ENCODE measurements at regions of chr18 and their contacts with region 1.

Region 1: GRCh38 chr18:9575558-9575957 is 38.8 kb downstream of the PPP4R1 start:
- DNase-seq: peak; percentile 96
- H3K4me3 ChIP-seq: no peak overlapping the region
- H3K27ac ChIP-seq: no peak overlapping the region
- H3K27me3 ChIP-seq: no peaks in the 10 kb centered on the region
- CTCF ChIP-seq: peak; percentile 92

Region 2: GRCh38 chr18:9494766-9495331 is 80.7 kb before region 1 on chr18:
- CTCF ChIA-PET with region 1: no interaction called
- POLR2A ChIA-PET with region 1: no interaction called
- DNase-seq: no peak
- H3K4me3 ChIP-seq: no peak overlapping the region
- H3K27ac ChIP-seq: peak overlapping the region; percentile 13
- H3K27me3 ChIP-seq: no peaks in the 10 kb centered on the region
- CTCF ChIP-seq: no peak

Region 3: GRCh38 chr18:9561759-9562158 is 13.8 kb before region 1 on chr18:
- CTCF ChIA-PET with region 1: interaction called, 21 read pairs
- POLR2A ChIA-PET with region 1: no interaction called
- DNase-seq: no peak
- H3K4me3 ChIP-seq: no peak overlapping the region
- H3K27ac ChIP-seq: no peak overlapping the region
- H3K27me3 ChIP-seq: no peaks in the 10 kb centered on the region
- CTCF ChIP-seq: no peak

Region 4: GRCh38 chr18:9586814-9587213 is 11.3 kb after region 1 on chr18:
- CTCF ChIA-PET with region 1: no interaction called
- POLR2A ChIA-PET with region 1: no interaction called
- DNase-seq: no peak
- H3K4me3 ChIP-seq: no peak overlapping the region
- H3K27ac ChIP-seq: no peak overlapping the region
- H3K27me3 ChIP-seq: no peaks in the 10 kb centered on the region
- CTCF ChIP-seq: no peak

Region 5: DNA sequence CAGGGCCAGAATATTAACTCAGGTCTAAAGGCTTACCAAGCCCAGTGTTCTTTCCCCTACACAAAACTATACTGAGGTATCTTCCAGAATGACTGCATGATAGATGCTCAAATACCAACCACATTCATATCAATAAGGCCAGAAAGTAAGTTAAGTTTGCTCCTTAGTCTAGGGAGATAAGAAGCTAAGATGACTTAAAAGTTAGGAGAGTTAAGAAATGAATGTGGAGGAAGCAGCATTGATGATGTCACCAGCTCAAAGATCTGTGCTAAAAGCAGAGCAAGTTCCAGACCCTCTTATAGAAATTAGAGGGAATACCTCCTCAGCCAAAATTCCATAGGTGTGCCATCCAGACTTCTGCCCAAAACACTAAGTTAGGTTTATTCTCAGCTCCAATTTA is 32.7 kb after region 1 on chr18:
- CTCF ChIA-PET with region 1: interaction called, 12 read pairs
- POLR2A ChIA-PET with region 1: no interaction called
- DNase-seq: no peak
- H3K4me3 ChIP-seq: no peak overlapping the region
- H3K27ac ChIP-seq: no peak overlapping the region
- H3K27me3 ChIP-seq: no peaks in the 10 kb centered on the region
- CTCF ChIP-seq: no peak

Region 6: GRCh38 chr18:9673296-9674251 is 98.0 kb after region 1 on chr18:
- CTCF ChIA-PET with region 1: interaction called, 16 read pairs
- POLR2A ChIA-PET with region 1: no interaction called
- DNase-seq: no peak
- H3K4me3 ChIP-seq: no peak overlapping the region
- H3K27ac ChIP-seq: no peak overlapping the region
- H3K27me3 ChIP-seq: no peaks in the 10 kb centered on the region
- CTCF ChIP-seq: peak; percentile 28; the same call in 1 of the 2 replicates

Region 7: DNA sequence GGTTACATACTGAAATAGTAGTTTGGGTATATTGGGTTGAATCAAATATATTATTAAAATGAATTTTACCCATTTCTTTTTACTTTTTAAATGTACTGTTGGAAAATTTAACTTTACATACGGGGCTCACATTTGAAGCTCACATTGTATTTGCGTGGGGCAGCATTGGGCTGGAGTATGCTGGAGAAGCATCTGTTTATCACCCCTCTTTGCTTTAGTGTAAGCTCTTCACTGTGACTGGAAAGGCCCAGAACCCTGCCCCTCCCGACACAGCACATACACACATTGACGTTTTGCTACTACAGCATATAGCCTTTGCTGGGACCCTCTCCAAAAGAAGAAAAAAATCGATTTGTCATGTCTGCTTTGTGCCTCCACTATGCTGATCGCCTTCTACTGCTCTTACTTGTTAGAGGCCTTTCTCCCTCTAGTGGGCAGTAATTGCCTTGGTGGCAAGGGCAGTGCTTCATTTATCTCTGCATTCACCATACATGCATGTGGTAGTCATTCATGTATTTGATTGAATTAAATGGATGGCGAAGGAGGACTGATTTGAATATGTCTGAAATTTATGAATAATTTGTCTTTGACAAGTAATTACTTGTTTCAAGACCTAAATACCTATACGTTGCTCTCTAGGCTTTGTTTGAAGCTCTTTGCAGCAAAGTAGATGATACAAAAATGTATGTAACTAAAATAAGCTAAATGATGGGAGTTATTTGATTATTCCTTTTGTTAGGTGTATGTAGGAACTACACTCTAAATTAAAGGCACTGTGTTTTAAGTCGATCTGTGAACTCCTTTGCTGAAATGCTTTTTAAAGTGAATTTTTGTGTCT is 375.7 kb after region 1 on chr18:
- CTCF ChIA-PET with region 1: interaction called, 34 read pairs
- POLR2A ChIA-PET with region 1: no interaction called
- DNase-seq: peak; percentile 43
- H3K4me3 ChIP-seq: no peak overlapping the region
- H3K27ac ChIP-seq: no peak overlapping the region
- H3K27me3 ChIP-seq: no peaks in the 10 kb centered on the region
- CTCF ChIP-seq: peak; percentile 86